AG04449 (cell line): ENCODE measurements at regions of chr10 and their contacts with region 1.

Region 1: DNA sequence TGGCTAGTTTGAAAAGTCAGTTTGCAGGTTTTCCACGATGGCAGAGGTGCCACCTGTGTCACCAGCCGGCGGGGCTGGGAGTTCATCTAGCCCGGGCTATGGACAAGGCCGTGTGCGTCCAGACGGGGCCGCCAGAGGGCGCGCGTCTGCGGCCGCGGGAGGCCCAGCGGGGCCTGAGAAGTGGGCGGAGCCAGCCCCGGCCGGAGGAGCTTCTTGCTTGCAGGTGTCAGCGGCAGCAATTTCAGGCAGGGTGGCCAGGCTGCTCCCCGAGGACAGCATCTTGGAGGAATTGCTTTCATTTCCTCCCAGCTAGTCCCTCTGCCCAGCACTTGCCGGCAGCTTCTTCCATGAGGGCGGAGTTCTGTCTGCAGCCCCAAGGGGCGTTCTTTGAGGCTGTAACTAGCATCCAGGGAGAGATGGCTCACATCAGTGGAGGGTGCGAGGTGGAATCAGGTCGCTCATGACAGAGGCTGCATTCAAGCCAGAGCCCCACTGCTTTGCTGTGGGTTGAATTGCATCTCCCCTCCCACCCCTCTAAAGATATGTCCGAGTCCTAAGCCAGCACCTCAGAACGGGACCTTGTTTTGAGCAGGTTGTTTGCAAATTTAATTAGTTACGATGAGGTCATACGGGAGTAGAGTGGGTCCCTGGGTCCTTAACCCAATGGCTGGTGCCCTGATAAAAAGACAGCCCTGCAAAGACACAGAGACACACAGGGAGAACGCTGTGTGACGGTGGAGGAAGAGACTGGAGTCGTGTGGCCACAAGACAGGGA is 85.9 kb upstream of the MKI67 start:
- DNase-seq: no peak
- H3K4me3 ChIP-seq: no peak overlapping the region
- CTCF ChIP-seq: peak; percentile 92

Region 2: GRCh38 chr10:128242641-128243040 is 30.5 kb after region 1 on chr10:
- CTCF ChIA-PET with region 1: no interaction called
- POLR2A ChIA-PET with region 1: no interaction called
- DNase-seq: no peak
- H3K4me3 ChIP-seq: no peak overlapping the region
- CTCF ChIP-seq: no peak

Region 3: DNA sequence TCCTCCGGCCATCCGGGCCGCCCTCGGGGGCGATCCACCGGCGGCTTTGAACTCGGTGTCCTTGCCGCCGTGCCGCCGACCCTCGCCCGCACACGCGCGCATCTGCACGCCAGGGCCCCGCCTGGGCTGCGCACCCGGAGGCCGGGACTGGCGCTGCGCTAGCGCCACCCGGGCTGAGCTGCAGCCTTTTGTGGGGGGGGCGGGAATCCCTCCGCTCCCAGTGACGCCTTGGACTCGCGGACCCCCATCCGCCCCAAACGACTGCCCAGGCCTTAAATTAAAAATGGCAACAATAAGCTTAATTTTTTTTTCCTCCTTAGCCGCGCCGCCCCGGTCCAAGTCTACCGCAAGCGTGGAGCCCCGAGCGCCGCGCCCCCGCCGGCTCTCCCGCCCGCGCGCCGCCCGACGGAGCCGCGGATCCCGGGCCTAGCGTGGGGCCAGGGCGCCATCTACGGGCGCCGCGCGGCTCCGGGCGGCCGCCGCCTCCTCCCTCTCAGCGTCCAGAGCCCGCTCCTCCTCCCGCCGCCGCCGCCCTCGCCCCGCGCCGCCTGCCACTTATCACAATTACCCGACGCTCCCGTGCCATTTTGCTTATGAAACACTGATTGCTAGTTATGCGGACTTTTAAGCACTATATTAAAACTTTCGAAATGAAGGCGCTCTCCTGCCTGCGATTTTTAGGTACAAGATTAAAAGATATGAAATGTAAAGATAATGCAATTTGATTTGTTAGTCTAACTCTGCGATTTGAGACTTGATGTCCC is 1759.4 kb after region 1 on chr10:
- CTCF ChIA-PET with region 1: interaction called, 20 read pairs
- POLR2A ChIA-PET with region 1: no interaction called
- DNase-seq: no peak
- H3K4me3 ChIP-seq: no peak overlapping the region
- CTCF ChIP-seq: peak; percentile 53